ENCODE measurements at regions of chr11 and their contacts with region 1.

Region 1: GRCh38 chr11:35822815-35823495 is 120.9 kb upstream of the LDLRAD3 start:
- DNase-seq: no peak
- ATAC-seq: no peak
- H3K4me3 ChIP-seq: no peak overlapping the region
- H3K4me3 Mint-ChIP-seq: no peak overlapping the region
- H3K27ac ChIP-seq: no peak overlapping the region
- H3K27ac Mint-ChIP-seq: no peak overlapping the region
- H3K4me1 ChIP-seq: peaks cover 10% of the 10 kb centered on the region
- H3K4me1 Mint-ChIP-seq: peaks cover 19% of the 10 kb centered on the region
- H3K27me3 ChIP-seq: no peaks in the 10 kb centered on the region
- H3K27me3 Mint-ChIP-seq: no peaks in the 10 kb centered on the region
- CTCF ChIP-seq: no peak

Region 2: DNA sequence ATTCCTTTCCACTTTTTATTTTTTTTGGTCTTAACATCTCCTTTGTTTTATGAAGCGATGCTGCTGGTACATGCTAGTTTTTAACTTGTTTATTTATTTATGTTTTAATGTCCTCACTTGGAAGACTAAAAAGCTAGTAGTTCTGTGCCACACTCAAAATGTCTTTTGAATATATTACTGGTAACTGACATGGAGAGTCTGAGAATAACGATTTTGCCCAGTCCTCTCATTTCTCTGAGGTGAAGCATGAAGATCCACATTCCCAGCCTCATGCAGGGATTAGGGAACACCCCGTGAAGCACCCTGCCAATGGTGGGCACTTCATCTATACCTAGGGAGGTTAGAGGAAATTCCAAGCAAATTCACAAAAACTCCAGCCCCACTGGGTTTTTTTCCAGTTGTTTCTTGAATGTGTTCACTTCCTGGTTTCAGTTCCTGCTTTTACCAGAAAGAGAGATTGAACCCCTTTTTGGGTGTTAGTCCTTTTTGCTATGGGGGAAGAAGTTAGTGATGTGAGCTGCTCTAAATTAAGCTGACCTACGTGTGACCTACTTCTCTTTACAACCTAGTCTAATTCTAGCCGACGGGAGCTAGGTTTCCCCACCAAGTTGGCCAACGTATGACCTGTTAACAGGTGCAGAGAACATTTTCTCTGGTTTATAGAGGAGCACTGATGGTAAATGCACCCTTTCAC is 509.7 kb before region 1 on chr11:
- CTCF ChIA-PET with region 1: no interaction called
- POLR2A ChIA-PET with region 1: no interaction called
- intact Hi-C with region 1: no loop called
- DNase-seq: peak in 2 of 14 experiments; percentile 46 to 48
- ATAC-seq: no peak
- H3K4me3 ChIP-seq: no peak overlapping the region
- H3K4me3 Mint-ChIP-seq: no peak overlapping the region
- H3K27ac ChIP-seq: no peak overlapping the region
- H3K27ac Mint-ChIP-seq: no peak overlapping the region
- H3K4me1 ChIP-seq: peaks cover 18% of the 10 kb centered on the region
- H3K4me1 Mint-ChIP-seq: peaks cover 7% of the 10 kb centered on the region
- H3K27me3 ChIP-seq: no peaks in the 10 kb centered on the region
- H3K27me3 Mint-ChIP-seq: no peaks in the 10 kb centered on the region
- CTCF ChIP-seq: no peak

Region 3: DNA sequence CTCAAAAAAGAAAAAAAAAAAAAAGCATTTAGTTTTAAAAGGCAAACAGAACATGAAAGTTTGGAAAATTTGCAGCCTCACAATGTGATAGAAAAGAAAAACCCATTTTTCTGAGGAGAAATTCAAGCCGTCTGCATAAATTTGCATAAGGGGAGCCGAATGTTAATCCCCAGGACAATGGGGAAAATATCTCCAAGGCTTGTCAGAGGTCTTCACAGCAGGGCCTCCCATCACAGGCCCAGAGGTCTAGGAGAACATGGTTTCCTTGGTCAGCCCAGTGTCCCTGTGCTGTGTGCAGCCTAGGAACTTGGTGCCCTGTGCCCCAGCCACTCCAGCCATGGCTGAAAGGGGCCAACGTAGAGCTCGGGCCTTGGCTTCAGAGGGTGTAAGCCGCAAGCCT is 51.2 kb before region 1 on chr11:
- CTCF ChIA-PET with region 1: no interaction called
- POLR2A ChIA-PET with region 1: no interaction called
- intact Hi-C with region 1: no loop called
- DNase-seq: no peak
- ATAC-seq: no peak
- H3K4me3 ChIP-seq: no peak overlapping the region
- H3K4me3 Mint-ChIP-seq: no peak overlapping the region
- H3K27ac ChIP-seq: no peak overlapping the region
- H3K27ac Mint-ChIP-seq: no peak overlapping the region
- H3K4me1 ChIP-seq: no peaks in the 10 kb centered on the region
- H3K4me1 Mint-ChIP-seq: peaks cover 15% of the 10 kb centered on the region
- H3K27me3 ChIP-seq: no peaks in the 10 kb centered on the region
- H3K27me3 Mint-ChIP-seq: no peaks in the 10 kb centered on the region
- CTCF ChIP-seq: no peak

Region 4: DNA sequence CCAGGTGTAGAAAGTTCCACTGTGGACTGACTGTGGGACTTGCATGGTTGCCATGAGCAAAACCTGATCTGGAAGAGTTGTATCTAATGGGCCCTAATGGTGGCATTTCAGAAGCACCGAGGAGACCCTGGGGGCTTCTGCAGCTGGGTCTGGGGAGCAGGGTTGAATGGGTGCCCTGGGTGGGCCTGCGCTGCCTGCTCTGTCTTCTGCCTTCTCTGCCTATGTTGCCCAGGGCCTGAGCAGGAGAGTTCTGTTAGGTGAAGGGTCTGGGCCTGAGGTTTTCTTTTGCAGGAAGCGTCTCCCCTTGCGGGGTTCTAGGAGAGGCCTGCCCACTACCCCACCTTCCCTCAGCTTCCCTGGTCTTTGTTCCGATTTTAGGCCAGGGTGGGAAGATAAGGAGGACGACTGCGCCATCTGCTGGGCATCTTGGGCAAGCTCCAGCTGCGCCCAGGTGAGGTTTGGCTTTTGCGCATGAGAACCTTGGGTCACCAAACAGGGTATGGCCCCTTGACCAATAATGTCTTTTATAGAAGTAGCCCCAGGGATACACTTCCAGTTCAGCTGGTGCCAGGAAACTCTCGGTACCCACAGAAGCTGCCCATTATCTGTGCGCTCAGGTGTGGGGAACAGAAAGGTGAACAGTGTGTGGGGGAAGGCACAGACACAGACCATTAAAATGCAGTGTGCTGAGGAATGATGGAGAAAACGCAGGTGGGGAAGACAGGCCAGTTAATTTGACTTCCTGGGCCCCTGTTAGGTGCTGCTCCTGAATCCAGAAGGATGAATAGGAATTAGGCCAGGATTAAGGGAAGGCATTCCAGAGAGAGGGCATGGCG is 443.1 kb after region 1 on chr11:
- CTCF ChIA-PET with region 1: interaction called, 4 read pairs
- POLR2A ChIA-PET with region 1: no interaction called
- intact Hi-C with region 1: loop called in 1 of 2 experiments (anchors 5 kb)
- DNase-seq: peak; percentile 19 to 74 (median 44)
- ATAC-seq: peak; percentile 58
- H3K4me3 ChIP-seq: no peak overlapping the region
- H3K4me3 Mint-ChIP-seq: no peak overlapping the region
- H3K27ac ChIP-seq: no peak overlapping the region
- H3K27ac Mint-ChIP-seq: no peak overlapping the region
- H3K4me1 ChIP-seq: peaks cover 2% of the 10 kb centered on the region
- H3K4me1 Mint-ChIP-seq: no peaks in the 10 kb centered on the region
- H3K27me3 ChIP-seq: no peaks in the 10 kb centered on the region
- H3K27me3 Mint-ChIP-seq: peaks cover 19% of the 10 kb centered on the region
- CTCF ChIP-seq: peak; percentile 79

Region 5: GRCh38 chr11:36478700-36479329 is 655.9 kb after region 1 on chr11:
- CTCF ChIA-PET with region 1: no interaction called
- POLR2A ChIA-PET with region 1: no interaction called
- intact Hi-C with region 1: loop called in 1 of 2 experiments (anchors 5 kb)
- DNase-seq: peak in 5 of 14 experiments; percentile 7 to 70 (median 56)
- ATAC-seq: no peak
- H3K4me3 ChIP-seq: no peak overlapping the region
- H3K4me3 Mint-ChIP-seq: no peak overlapping the region
- H3K27ac ChIP-seq: no peak overlapping the region
- H3K27ac Mint-ChIP-seq: no peak overlapping the region
- H3K4me1 ChIP-seq: peaks cover 2% of the 10 kb centered on the region
- H3K4me1 Mint-ChIP-seq: peaks cover 2% of the 10 kb centered on the region
- H3K27me3 ChIP-seq: no peaks in the 10 kb centered on the region
- H3K27me3 Mint-ChIP-seq: no peaks in the 10 kb centered on the region
- CTCF ChIP-seq: peak; percentile 57